ENCODE measurements at regions of chr11 and their contacts with region 1.

Region 1: GRCh38 chr11:9396752-9397151 is 12.3 kb downstream of the IPO7 start:
- DNase-seq: no peak
- ATAC-seq: no peak
- H3K4me3 ChIP-seq: no peak overlapping the region
- H3K27ac ChIP-seq: no peak overlapping the region
- H3K4me1 ChIP-seq: peaks cover 0 to 43% (median 14%) of the 10 kb centered on the region in 9 donors
- H3K27me3 ChIP-seq: no peaks in the 10 kb centered on the region
- CTCF ChIP-seq: no peak

Region 2: DNA sequence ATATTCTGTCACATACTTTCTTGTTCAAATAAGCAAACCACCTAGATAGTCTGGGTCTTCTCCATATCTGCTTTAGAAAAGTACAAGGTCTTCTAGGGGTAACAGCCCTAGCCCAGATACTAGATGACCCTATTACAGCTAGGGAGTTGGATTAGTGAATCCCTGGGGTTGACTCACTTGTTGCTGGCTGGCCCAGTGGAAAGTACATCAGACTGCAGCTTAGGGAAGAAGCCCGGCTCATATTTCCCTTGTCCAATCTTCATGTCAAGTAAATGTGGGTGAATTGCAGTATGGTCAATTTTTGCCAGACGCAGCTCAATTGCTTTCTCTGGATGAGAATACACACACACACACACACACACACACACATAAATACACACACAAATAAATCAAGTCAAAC is 226.3 kb before region 1 on chr11:
- intact Hi-C with region 1: loop called in 1 of 10 experiments (anchors 10 kb)
- DNase-seq: no peak
- ATAC-seq: peak in 1 of 8 donors; percentile 48
- H3K4me3 ChIP-seq: no peak overlapping the region
- H3K27ac ChIP-seq: no peak overlapping the region
- H3K4me1 ChIP-seq: peaks cover 0 to 20% (median 0%) of the 10 kb centered on the region in 9 donors
- H3K27me3 ChIP-seq: no peaks in the 10 kb centered on the region
- CTCF ChIP-seq: no peak

Region 3: DNA sequence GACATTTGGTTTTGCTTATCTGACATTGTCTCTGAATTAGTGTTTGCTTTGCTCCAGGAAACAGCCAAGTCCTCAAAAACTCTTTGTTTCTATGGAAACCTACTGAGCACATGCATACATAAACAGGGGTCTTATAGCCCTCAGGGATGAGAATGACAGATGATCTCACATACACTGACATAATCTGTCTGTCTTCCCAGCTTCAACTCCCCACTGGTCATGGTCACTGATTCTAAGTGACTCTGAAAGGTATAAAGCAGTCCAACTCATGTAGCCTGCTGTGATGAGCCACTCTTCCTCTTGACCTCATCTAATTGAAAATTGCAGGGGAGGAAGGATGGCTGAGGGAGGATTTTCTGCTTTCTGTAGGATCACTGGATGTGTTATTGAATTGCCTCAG is 76.7 kb after region 1 on chr11:
- intact Hi-C with region 1: no loop called
- DNase-seq: no peak
- ATAC-seq: no peak
- H3K4me3 ChIP-seq: no peak overlapping the region
- H3K27ac ChIP-seq: no peak overlapping the region
- H3K4me1 ChIP-seq: no peaks in the 10 kb centered on the region
- H3K27me3 ChIP-seq: no peaks in the 10 kb centered on the region
- CTCF ChIP-seq: no peak

Measured in heart right ventricle (tissue), 16 donors.